AG04450 (cell line): ENCODE measurements at regions of chr16 and their contacts with region 1.

Region 1: GRCh38 chr16:85610508-85611332 is 2.4 kb upstream of the GSE1 start:
- DNase-seq: peak; percentile 45
- H3K4me3 ChIP-seq: no peak overlapping the region; the same call in 1 of the 2 replicates
- H3K27ac ChIP-seq: no peak overlapping the region
- H3K27me3 ChIP-seq: no peaks in the 10 kb centered on the region
- CTCF ChIP-seq: peak; percentile 90

Region 2: DNA sequence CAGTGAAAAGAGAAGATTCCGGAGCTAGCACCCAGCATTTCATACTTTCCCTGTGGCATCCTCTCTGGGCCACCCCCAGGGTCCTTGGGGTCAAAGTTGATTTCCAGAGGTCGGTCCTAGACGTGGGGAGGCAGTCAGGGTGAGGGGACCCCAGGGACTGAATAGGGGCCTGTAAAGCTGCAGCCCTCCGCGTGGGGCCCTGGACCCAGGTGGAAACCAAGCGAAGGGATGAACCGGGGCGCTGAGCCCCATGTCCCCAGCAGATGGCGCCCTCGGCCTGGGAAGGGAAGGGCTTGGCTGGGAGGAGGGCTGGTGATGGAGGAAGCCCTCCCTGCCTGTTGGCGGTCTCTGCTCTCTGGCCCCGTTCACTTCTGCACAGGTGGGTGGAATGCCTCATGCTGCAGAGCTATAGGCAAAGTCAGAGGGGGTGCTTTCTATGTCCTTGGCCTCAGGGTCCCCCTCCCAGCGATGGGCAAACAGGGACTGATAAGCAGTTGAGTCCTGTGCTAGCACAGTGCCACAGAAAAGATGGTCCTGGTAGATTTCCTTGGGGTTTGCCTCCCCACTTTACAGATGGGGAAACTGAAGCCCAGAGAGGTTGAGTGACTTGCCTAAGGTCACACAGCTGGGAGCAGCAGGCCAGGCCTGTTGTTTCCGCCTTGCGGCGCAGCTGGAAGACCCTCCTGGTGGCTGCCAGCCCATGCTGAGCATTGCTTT is 335.0 kb before region 1 on chr16:
- CTCF ChIA-PET with region 1: interaction called, 25 read pairs
- POLR2A ChIA-PET with region 1: no interaction called
- DNase-seq: no peak
- H3K4me3 ChIP-seq: no peak overlapping the region
- H3K27ac ChIP-seq: no peak overlapping the region
- H3K27me3 ChIP-seq: no peaks in the 10 kb centered on the region
- CTCF ChIP-seq: peak; percentile 96

Region 3: DNA sequence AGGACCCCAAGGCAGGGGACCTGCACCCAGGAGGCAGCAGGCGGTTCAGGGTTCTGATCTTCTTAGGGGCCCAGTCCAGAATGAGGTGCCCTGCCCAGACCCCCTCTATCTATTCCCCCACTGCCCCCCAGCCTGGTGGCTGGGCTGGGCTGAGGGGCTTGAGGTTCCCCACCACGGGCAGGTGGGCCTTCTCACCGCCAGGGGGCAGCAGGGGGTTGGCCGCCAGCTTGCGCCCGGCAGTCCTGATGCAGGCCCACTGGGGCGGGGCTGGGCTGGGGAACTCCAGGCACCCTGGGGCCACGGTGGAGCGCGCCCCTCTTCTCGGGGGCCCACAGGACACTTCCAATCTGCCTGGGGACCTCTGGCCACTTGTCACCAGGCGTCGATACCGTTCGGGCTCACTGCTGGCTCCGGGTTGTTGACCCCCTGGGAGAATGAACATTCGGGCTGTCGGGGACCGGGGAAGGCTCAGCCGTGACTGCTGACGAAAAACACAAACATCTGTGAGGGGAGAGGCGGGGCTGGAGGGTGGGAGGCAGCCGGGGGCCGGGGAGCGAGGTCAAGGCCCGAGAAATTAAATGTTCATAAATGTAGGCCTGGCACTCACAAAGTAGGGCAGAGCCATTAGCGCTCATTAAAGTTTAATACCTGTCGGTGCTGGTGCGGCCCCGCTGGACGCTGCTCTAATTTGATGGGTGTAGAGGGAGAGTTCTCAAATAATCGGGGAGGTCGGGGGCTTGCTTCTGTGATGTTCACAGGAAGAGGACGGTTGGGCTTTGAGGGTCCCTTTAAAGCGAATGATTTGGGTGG is 216.8 kb before region 1 on chr16:
- CTCF ChIA-PET with region 1: interaction called, 16 read pairs
- POLR2A ChIA-PET with region 1: interaction called, 3 read pairs
- DNase-seq: no peak
- H3K4me3 ChIP-seq: no peak overlapping the region
- H3K27ac ChIP-seq: no peak overlapping the region
- H3K27me3 ChIP-seq: no peaks in the 10 kb centered on the region
- CTCF ChIP-seq: peak; percentile 81

Region 4: DNA sequence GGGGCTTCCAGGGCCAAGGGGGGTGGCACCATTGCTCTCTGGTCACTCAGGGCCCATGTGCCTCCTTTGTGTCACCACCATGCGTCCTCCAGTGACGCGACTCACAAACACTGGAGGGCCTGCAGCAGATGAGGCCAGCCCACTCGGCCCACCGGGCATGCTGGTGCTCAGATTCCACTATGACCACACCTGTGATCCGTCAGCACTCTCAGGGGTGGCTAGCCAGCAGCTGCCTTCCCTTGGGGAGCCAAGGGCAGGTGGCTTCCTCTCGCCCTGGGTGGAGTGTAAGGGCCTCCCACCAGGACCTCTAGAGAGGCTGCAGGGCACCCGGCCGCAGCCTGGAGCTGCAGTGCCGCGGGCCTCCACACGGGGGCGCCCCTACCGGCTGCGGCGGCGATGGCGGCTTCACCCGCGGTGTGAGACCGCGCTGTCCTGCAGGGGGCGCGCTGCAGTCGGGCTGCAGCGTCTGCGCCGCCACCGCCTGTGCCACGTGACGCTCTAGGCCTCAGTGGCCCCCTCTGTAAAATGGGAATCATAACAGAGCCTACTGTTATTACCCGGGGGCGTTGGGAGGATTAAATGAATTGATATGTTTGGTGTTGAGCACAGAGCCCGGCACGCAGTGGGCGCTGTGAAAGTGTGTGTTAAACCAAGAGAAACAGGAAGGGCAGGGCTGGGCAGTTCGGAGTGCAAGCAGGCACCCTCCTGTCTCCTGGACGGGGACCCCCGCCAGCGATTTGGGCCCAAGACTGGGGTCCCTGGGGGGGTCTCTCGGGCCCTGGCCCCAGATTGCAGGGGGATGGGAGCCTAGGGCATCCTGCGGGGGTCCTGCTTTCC is 190.0 kb before region 1 on chr16:
- CTCF ChIA-PET with region 1: interaction called, 20 read pairs
- POLR2A ChIA-PET with region 1: no interaction called
- DNase-seq: no peak
- H3K4me3 ChIP-seq: no peak overlapping the region
- H3K27ac ChIP-seq: no peak overlapping the region
- H3K27me3 ChIP-seq: no peaks in the 10 kb centered on the region
- CTCF ChIP-seq: peak; percentile 81

Region 5: GRCh38 chr16:85554112-85554813 is 56.5 kb before region 1 on chr16:
- CTCF ChIA-PET with region 1: interaction called, 14 read pairs
- POLR2A ChIA-PET with region 1: no interaction called
- DNase-seq: no peak
- H3K4me3 ChIP-seq: peak overlapping the region; percentile 75
- H3K27ac ChIP-seq: peak overlapping the region; percentile 82
- H3K27me3 ChIP-seq: no peaks in the 10 kb centered on the region
- CTCF ChIP-seq: no peak